Naive thymus-derived CD4-positive, alpha-beta T cell (primary cell): ENCODE measurements at regions of chr7 and their contacts with region 1.

Region 1: GRCh38 chr7:149624419-149625339 is 127.1 kb upstream of the ZNF746 start:
- DNase-seq: peak; percentile 79 to 93 (median 84)
- ATAC-seq: peak; percentile 95
- H3K4me3 ChIP-seq: peak overlapping the region; percentile 88
- H3K4me3 Mint-ChIP-seq: peak overlapping the region; percentile 91 to 96 (median 94)
- H3K27ac ChIP-seq: peak overlapping the region; percentile 80
- H3K27ac Mint-ChIP-seq: peak overlapping the region; percentile 50 to 95 (median 90)
- H3K4me1 ChIP-seq: peaks cover 19 to 37% of the 10 kb centered on the region in 2 donors
- H3K4me1 Mint-ChIP-seq: peaks cover 28 to 42% (median 37%) of the 10 kb centered on the region in 7 donors
- H3K27me3 ChIP-seq: no peaks in the 10 kb centered on the region
- H3K27me3 Mint-ChIP-seq: peaks cover 0 to 24% (median 4%) of the 10 kb centered on the region in 5 donors

Region 2: DNA sequence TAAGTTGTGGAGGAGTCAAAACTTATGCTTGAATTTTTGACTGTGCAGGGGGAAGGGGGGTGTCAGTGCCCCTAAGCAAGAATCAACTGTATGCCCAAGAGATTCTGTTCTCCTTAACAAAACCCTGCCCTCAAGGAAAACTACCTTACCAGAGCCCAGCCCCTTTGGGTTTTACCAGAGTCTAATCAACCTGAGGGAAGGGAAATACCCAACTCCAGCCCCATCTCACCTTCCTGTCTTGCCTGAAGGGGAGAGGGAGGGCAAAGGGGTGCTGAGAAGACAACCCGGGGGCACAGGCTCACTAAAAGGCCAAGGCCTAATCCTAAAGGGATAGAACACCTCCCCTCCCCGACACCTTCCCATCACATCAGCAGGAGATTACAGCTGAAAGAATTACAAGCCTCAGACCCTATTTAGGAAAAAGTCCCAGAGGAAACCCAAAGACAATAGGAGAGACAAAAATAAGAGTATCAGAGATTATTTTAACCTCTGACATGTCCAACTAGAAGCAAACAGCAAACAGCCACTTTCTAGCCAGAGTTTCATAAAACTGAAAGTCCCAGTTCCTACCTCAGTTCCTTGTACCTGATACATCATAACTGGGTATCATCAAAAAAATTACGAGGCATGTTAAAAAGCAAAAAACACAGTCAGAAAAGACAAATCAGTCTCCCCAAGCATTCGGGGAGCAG is 1061.0 kb before region 1 on chr7:
- CTCF ChIA-PET with region 1: no interaction called
- POLR2A ChIA-PET with region 1: no interaction called
- intact Hi-C with region 1: no loop called
- DNase-seq: no peak
- ATAC-seq: no peak
- H3K4me3 ChIP-seq: peak overlapping the region; percentile 16
- H3K4me3 Mint-ChIP-seq: peak overlapping the region in 5 of 10 donors; percentile 15 to 70 (median 61)
- H3K27ac ChIP-seq: no peak overlapping the region
- H3K27ac Mint-ChIP-seq: peak overlapping the region in 4 of 9 donors; percentile 44 to 86 (median 70)
- H3K4me1 ChIP-seq: peaks cover 6 to 9% of the 10 kb centered on the region in 2 donors
- H3K4me1 Mint-ChIP-seq: peaks cover 0 to 25% (median 15%) of the 10 kb centered on the region in 7 donors
- H3K27me3 ChIP-seq: no peaks in the 10 kb centered on the region
- H3K27me3 Mint-ChIP-seq: peaks cover 0 to 20% (median 18%) of the 10 kb centered on the region in 5 donors

Region 3: DNA sequence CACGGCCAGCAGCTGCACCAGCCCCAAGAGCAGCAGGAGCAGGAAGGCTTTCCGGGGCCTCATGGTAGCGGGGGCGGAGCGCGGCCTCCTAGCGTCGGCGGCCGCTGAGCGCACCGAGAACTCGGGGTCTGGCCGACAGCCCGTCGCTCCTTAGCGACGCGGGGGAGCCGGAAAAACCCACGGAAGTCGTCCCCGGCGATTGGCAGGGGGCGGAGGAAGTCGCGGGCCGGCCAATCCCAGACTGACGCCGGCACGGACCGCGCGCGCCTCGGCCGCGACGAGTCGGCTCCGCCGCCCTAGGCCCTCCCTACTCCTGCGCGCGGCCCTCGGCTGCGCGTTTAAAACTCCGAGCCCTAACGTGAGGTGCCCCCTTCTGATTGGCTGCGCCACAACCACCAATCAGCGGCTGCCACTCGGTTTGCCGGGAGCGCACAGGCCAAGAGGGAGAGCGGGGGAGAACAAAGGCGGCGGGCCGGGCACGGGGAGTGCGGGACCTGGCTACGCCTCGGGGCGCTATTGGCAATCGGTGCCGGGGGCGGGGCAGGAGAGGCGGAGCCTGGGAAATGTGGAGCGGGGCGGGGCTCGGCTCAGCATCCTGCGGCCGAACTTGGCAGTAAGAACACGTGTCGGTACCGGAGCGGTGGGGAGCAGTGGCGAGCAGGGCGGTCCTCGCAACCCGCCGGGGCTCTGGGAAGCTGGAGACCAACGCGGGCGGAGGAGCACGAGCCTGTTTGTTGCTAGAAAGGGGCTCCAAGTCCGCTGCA is 596.2 kb before region 1 on chr7 and contains the start of gene PDIA4:
- CTCF ChIA-PET with region 1: no interaction called
- POLR2A ChIA-PET with region 1: no interaction called
- intact Hi-C with region 1: loop called in 1 of 2 experiments (anchors 1 kb)
- DNase-seq: peak; percentile 97 to 100 (median 99)
- ATAC-seq: peak; percentile 92
- H3K4me3 ChIP-seq: peak within 1 kb of the TSS; percentile 65
- H3K4me3 Mint-ChIP-seq: peak within 1 kb of the TSS; percentile 82 to 95 (median 92)
- H3K27ac ChIP-seq: peak within 1 kb of the TSS; percentile 89
- H3K27ac Mint-ChIP-seq: peak within 1 kb of the TSS; percentile 89 to 96 (median 93)
- H3K4me1 ChIP-seq: peaks cover 16 to 17% of the 10 kb centered on the region in 2 donors
- H3K4me1 Mint-ChIP-seq: peaks cover 27 to 48% (median 41%) of the 10 kb centered on the region in 7 donors
- H3K27me3 ChIP-seq: no peaks in the 10 kb centered on the region
- H3K27me3 Mint-ChIP-seq: peaks cover 0 to 4% (median 0%) of the 10 kb centered on the region in 5 donors
- total RNA-seq, gene PDIA4: 38.2 to 157 (median 73.7) TPM

Region 4: DNA sequence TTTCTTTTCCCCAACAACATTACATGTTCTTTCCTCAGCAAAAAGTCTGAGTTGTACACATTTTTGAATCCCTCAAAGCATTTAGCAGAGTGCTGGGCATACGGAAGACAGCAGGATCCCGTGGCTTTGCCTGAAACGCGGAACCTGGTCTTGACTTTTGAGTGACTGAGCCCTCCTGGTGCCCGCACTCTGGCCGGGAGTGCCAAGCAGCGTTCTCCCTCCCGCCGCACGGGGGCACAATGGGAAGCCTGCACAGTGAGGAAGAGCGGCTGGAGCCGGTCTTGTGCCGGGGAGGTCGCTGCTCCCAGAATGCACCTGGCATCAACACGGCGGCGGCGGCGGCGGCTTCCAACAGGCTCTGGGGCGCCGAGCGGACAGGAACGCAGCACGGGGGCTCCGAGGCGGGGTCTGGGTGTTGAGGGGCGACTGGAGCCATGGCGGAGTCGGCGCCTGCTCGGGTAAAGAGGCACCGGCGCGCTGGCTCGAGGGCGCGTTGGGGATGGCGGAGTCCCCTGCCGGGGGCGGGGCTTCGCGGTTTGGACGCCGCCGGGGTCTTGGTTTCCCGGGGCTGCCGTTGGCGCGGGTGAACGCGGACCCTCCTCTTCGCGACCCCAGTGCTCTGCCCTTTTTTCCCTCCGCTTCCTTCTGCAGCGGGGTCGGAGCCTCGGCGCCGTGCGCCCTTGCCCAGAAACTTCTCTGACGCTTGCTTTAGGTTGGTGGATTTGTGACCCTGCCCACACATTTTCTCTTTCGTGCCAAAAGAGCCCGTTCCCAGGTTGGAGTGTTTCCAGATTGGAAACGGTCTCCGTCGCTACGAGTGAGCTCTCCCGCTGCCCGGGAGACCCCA is 385.1 kb before region 1 on chr7 and contains the start of gene ZNF212:
- CTCF ChIA-PET with region 1: no interaction called
- POLR2A ChIA-PET with region 1: interaction called, 3 read pairs
- intact Hi-C with region 1: loop called in 1 of 2 experiments (anchors 1 kb)
- DNase-seq: peak; percentile 75 to 89 (median 84)
- ATAC-seq: peak; percentile 100
- H3K4me3 ChIP-seq: peak within 1 kb of the TSS; percentile 90
- H3K4me3 Mint-ChIP-seq: peak within 1 kb of the TSS; percentile 85 to 95 (median 92)
- H3K27ac ChIP-seq: peak within 1 kb of the TSS; percentile 76
- H3K27ac Mint-ChIP-seq: peak within 1 kb of the TSS; percentile 71 to 89 (median 87)
- H3K4me1 ChIP-seq: peaks cover 14 to 16% of the 10 kb centered on the region in 2 donors
- H3K4me1 Mint-ChIP-seq: peaks cover 23 to 43% (median 33%) of the 10 kb centered on the region in 7 donors
- H3K27me3 ChIP-seq: no peaks in the 10 kb centered on the region
- H3K27me3 Mint-ChIP-seq: peaks cover 0 to 6% (median 0%) of the 10 kb centered on the region in 5 donors
- total RNA-seq, gene ZNF212: 10.4 to 20.6 (median 13.3) TPM

Region 5: GRCh38 chr7:149422129-149422913 is 202.4 kb before region 1 on chr7:
- CTCF ChIA-PET with region 1: no interaction called
- POLR2A ChIA-PET with region 1: interaction called, 5 read pairs
- intact Hi-C with region 1: loop called (anchors 1 kb)
- DNase-seq: peak; percentile 25 to 85 (median 75)
- ATAC-seq: peak; percentile 99
- H3K4me3 ChIP-seq: peak overlapping the region; percentile 75
- H3K4me3 Mint-ChIP-seq: peak overlapping the region; percentile 69 to 80 (median 76)
- H3K27ac ChIP-seq: peak overlapping the region; percentile 77
- H3K27ac Mint-ChIP-seq: peak overlapping the region in 8 of 9 donors; percentile 68 to 84 (median 81)
- H3K4me1 ChIP-seq: no peaks in the 10 kb centered on the region
- H3K4me1 Mint-ChIP-seq: peaks cover 0 to 17% (median 7%) of the 10 kb centered on the region in 7 donors
- H3K27me3 ChIP-seq: no peaks in the 10 kb centered on the region
- H3K27me3 Mint-ChIP-seq: peaks cover 0 to 14% (median 0%) of the 10 kb centered on the region in 5 donors

Region 6: GRCh38 chr7:149598721-149599306 is 25.9 kb before region 1 on chr7:
- CTCF ChIA-PET with region 1: interaction called, 6 read pairs
- POLR2A ChIA-PET with region 1: interaction called, 4 read pairs
- intact Hi-C with region 1: loop called (anchors 1 kb)
- DNase-seq: peak in 1 of 9 donors; percentile 30
- ATAC-seq: no peak
- H3K4me3 ChIP-seq: no peak overlapping the region
- H3K4me3 Mint-ChIP-seq: peak overlapping the region in 7 of 10 donors; percentile 18 to 84 (median 77)
- H3K27ac ChIP-seq: no peak overlapping the region
- H3K27ac Mint-ChIP-seq: peak overlapping the region in 7 of 9 donors; percentile 78 to 94 (median 88)
- H3K4me1 ChIP-seq: peaks cover 18 to 22% of the 10 kb centered on the region in 2 donors
- H3K4me1 Mint-ChIP-seq: peaks cover 30 to 50% (median 42%) of the 10 kb centered on the region in 7 donors
- H3K27me3 ChIP-seq: no peaks in the 10 kb centered on the region
- H3K27me3 Mint-ChIP-seq: peaks cover 0 to 9% (median 0%) of the 10 kb centered on the region in 5 donors

Region 7: GRCh38 chr7:151080522-151081169 is 1456.0 kb after region 1 on chr7 and contains the start of gene FASTK:
- CTCF ChIA-PET with region 1: no interaction called
- POLR2A ChIA-PET with region 1: no interaction called
- intact Hi-C with region 1: loop called in 1 of 2 experiments (anchors 5 kb)
- DNase-seq: peak; percentile 79 to 89 (median 87)
- ATAC-seq: peak; percentile 85
- H3K4me3 ChIP-seq: peak within 1 kb of the TSS; percentile 86
- H3K4me3 Mint-ChIP-seq: peak within 1 kb of the TSS; percentile 87 to 97 (median 88)
- H3K27ac ChIP-seq: peak within 1 kb of the TSS; percentile 93
- H3K27ac Mint-ChIP-seq: peak within 1 kb of the TSS; percentile 72 to 92 (median 88)
- H3K4me1 ChIP-seq: peaks cover 41 to 44% of the 10 kb centered on the region in 2 donors
- H3K4me1 Mint-ChIP-seq: peaks cover 21 to 52% (median 39%) of the 10 kb centered on the region in 7 donors
- H3K27me3 ChIP-seq: no peaks in the 10 kb centered on the region
- H3K27me3 Mint-ChIP-seq: peaks cover 0 to 12% (median 0%) of the 10 kb centered on the region in 5 donors
- total RNA-seq, gene FASTK: 94.1 to 136 (median 101) TPM